A549 (cell line): ENCODE measurements at regions of chr9 and their contacts with region 1.

Region 1: DNA sequence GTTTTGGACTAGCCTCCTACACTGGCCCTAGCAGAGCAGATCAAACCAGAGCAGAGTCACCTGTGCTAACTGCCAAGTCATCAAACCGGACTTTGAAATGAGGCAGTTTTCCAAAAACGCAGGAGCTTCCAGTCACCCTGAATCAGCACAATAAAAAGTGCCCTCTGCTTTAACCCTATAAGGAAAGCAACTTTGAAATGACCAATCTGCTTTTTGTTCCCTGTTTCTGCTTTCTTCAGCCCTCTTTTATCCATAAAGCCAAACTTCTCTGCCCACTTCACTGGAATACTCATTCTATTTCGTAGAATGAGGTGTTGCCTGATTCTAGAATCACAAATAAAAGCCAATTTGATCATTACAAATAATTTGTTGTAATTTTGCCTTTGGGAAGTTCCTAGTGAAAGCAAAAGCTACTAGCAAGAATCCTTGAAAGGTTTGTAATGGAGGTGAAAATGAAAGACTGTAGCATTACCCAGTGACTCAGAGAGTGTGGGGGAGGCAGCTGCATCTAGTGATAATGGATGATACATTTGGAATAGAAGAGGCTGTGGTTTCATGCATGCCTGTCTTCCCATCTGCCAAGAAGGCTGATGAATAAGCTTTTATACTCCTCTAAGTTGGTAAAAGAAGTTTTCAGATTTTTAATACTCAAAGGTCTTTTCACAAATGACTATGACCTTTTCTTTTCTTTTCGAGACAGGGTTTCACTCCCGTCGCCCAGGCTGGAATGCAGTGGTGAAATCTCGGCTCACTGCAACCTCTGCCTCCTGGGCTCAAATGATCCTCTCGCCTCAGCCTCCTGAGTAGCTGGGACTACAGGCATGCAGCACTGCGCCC is 14.9 kb downstream of the SPAAR start:
- DNase-seq: peak; percentile 61 to 92
- ATAC-seq: peak; percentile 92 to 93
- H3K4me3 ChIP-seq: no peak overlapping the region
- H3K27ac ChIP-seq: peak overlapping the region; percentile 78 to 90
- H3K4me1 ChIP-seq: peaks cover 24% of the 10 kb centered on the region
- CTCF ChIP-seq: no peak
- EP300 ChIP-seq: peak in 1 of 2 experiments; percentile 32; a peak in 1 of 5 replicates
- POLR2A ChIP-seq: no peak
- RAD21 ChIP-seq: no peak

Region 2: GRCh38 chr9:35910613-35911359 is 13.4 kb before region 1 on chr9:
- CTCF ChIA-PET with region 1: interaction called, 92 read pairs
- POLR2A ChIA-PET with region 1: interaction called, 4 read pairs
- DNase-seq: peak; percentile 79 to 82
- ATAC-seq: peak in 1 of 2 experiments; percentile 22; a peak in 3 of 6 replicates
- H3K4me3 ChIP-seq: no peak overlapping the region
- H3K27ac ChIP-seq: peak overlapping the region; percentile 93 to 99
- H3K4me1 ChIP-seq: peaks cover 49% of the 10 kb centered on the region
- CTCF ChIP-seq: peak; percentile 80
- EP300 ChIP-seq: no peak
- POLR2A ChIP-seq: no peak
- RAD21 ChIP-seq: peak; percentile 86 to 87

Region 3: GRCh38 chr9:35945341-35946018 is 21.3 kb after region 1 on chr9:
- CTCF ChIA-PET with region 1: interaction called, 50 read pairs
- POLR2A ChIA-PET with region 1: interaction called, 7 read pairs
- DNase-seq: peak; percentile 90 to 94
- ATAC-seq: peak; percentile 84 to 95
- H3K4me3 ChIP-seq: peak overlapping the region; percentile 32
- H3K27ac ChIP-seq: peak overlapping the region; percentile 52 to 78
- H3K4me1 ChIP-seq: peaks cover 4% of the 10 kb centered on the region; the same call in 1 of the 3 replicates
- CTCF ChIP-seq: peak; percentile 80
- EP300 ChIP-seq: no peak
- POLR2A ChIP-seq: no peak
- RAD21 ChIP-seq: peak; percentile 65 to 68